Tibial artery (tissue), 4 donors: ENCODE measurements at regions of chr5 and their contacts with region 1.

Region 1: GRCh38 chr5:133111299-133111698 is 59.5 kb downstream of the HSPA4 start:
- DNase-seq: peak; percentile 87 to 92
- H3K4me3 ChIP-seq: no peak overlapping the region
- H3K27ac ChIP-seq: peak overlapping the region; percentile 28 to 58
- H3K4me1 ChIP-seq: peaks cover 0 to 22% (median 16%) of the 10 kb centered on the region in 4 donors
- H3K27me3 ChIP-seq: no peaks in the 10 kb centered on the region
- CTCF ChIP-seq: peak; percentile 84 to 90

Region 2: GRCh38 chr5:133240425-133241091 is 129.3 kb after region 1 on chr5:
- intact Hi-C with region 1: loop called (anchors 10 kb)
- DNase-seq: peak in 1 of 2 donors; percentile 35
- H3K4me3 ChIP-seq: no peak overlapping the region
- H3K27ac ChIP-seq: no peak overlapping the region
- H3K4me1 ChIP-seq: no peaks in the 10 kb centered on the region
- H3K27me3 ChIP-seq: no peaks in the 10 kb centered on the region
- CTCF ChIP-seq: no peak

Region 3: GRCh38 chr5:133287500-133287899 is 176.2 kb after region 1 on chr5:
- intact Hi-C with region 1: loop called (anchors 5 kb)
- DNase-seq: no peak
- H3K4me3 ChIP-seq: no peak overlapping the region
- H3K27ac ChIP-seq: no peak overlapping the region
- H3K4me1 ChIP-seq: no peaks in the 10 kb centered on the region
- H3K27me3 ChIP-seq: peaks cover 0 to 3% of the 10 kb centered on the region in 2 donors
- CTCF ChIP-seq: no peak

Region 4: GRCh38 chr5:133868946-133869518 is 757.7 kb after region 1 on chr5:
- intact Hi-C with region 1: loop called (anchors 10 kb)
- DNase-seq: peak; percentile 71 to 85
- H3K4me3 ChIP-seq: peak overlapping the region; percentile 16 to 22
- H3K27ac ChIP-seq: peak overlapping the region in 1 of 2 donors; percentile 41
- H3K4me1 ChIP-seq: peaks cover 0 to 7% (median 3%) of the 10 kb centered on the region in 4 donors
- H3K27me3 ChIP-seq: no peaks in the 10 kb centered on the region
- CTCF ChIP-seq: peak; percentile 75 to 79